ENCODE measurements at regions of chr7 and their contacts with region 1.

Region 1: DNA sequence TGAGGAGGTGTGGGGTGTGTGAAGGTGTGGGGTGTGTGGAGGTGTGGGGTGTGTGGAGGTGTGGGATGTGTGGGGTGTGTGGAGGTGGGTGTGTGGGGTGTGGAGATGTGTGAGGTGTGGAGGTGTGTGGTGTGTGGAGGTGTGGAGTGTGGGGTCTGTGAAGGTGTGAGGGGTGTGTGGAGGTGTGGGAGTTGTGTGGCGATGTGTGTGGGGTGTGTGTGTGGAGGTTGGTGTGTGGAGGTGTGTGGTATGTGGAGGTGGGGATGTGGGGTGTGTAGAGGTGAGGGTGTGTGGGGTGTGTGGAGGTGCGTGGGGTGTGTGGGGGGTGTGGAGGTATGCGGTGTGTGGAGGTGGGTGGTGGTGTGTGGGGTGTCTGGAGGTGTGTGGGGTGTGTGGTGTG is 34.8 kb downstream of the SPDYE17 start:
- DNase-seq: peak; percentile 92
- H3K4me3 ChIP-seq: no peak overlapping the region
- H3K27ac ChIP-seq: no peak overlapping the region
- H3K4me1 ChIP-seq: no peaks in the 10 kb centered on the region
- H3K27me3 ChIP-seq: no peaks in the 10 kb centered on the region
- CTCF ChIP-seq: no peak
- EP300 ChIP-seq: no peak
- POLR2A ChIP-seq: no peak

Region 2: GRCh38 chr7:76509931-76510877 is 487.2 kb before region 1 on chr7 and contains the start of gene UPK3B:
- intact Hi-C with region 1: loop called (anchors 10 kb)
- DNase-seq: no peak
- H3K4me3 ChIP-seq: no peak within 1 kb of the TSS
- H3K27ac ChIP-seq: no peak within 1 kb of the TSS
- H3K4me1 ChIP-seq: peaks cover 5 to 20% (median 18%) of the 10 kb centered on the region in 4 donors
- H3K27me3 ChIP-seq: no peaks in the 10 kb centered on the region
- CTCF ChIP-seq: no peak
- EP300 ChIP-seq: no peak
- POLR2A ChIP-seq: no peak
- total RNA-seq, gene UPK3B: 0.75 to 0.84 TPM in 2 of 4 donors, not detected in the others

Measured in esophagus muscularis mucosa (tissue), 4 donors.